HEK293T (cell line): ENCODE measurements at regions of chr7 and their contacts with region 1.

Region 1: DNA sequence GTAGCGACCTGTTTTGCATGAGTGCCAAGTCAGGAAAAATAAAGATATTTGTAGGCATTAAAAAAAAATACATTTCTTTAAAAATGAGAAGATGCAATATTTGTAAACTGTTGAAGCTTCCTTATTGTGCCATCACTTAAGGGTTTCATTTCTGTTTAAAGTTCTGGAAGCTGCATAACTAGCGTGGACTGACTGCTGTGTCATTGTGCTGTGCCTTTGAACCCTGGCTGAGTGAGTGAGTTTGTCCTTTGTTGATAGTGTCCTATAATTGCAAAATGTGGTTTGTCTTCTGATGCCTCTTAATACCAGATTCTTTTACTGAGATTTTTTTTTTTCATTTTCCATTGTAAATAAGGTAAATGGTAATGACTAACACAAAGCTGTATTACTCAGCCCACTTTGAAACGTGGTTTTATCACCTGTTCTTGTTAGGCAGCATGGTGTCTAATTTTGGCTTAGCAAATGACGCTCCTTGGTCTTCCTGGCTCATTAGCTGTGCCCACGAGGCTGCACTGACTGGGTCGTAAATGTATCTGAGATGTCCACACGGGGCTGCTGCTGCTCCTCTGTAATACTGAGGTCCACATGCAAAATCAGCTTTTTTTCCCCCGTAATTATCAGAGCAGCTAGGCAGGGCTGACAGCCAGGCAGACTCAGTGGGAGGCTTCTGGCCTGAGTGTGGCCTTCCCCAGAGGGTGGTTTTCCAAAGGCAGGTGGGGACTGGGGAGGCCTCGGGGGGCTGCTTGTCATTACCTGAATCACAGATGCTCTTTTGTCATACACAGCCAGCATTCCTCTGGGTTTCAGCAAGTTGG is 14.8 kb downstream of the ZSCAN25 start:
- DNase-seq: peak; percentile 22

Region 2: GRCh38 chr7:99579956-99580777 is 51.3 kb before region 1 on chr7:
- CTCF ChIA-PET with region 1: no interaction called
- POLR2A ChIA-PET with region 1: no interaction called
- DNase-seq: no peak

Region 3: GRCh38 chr7:99616359-99617191 is 14.9 kb before region 1 on chr7 and contains the start of gene ZSCAN25:
- CTCF ChIA-PET with region 1: no interaction called
- POLR2A ChIA-PET with region 1: interaction called, 13 read pairs
- DNase-seq: peak; percentile 96

Region 4: GRCh38 chr7:99648843-99649242 is 17.3 kb after region 1 on chr7:
- CTCF ChIA-PET with region 1: no interaction called
- POLR2A ChIA-PET with region 1: no interaction called
- DNase-seq: no peak

Region 5: DNA sequence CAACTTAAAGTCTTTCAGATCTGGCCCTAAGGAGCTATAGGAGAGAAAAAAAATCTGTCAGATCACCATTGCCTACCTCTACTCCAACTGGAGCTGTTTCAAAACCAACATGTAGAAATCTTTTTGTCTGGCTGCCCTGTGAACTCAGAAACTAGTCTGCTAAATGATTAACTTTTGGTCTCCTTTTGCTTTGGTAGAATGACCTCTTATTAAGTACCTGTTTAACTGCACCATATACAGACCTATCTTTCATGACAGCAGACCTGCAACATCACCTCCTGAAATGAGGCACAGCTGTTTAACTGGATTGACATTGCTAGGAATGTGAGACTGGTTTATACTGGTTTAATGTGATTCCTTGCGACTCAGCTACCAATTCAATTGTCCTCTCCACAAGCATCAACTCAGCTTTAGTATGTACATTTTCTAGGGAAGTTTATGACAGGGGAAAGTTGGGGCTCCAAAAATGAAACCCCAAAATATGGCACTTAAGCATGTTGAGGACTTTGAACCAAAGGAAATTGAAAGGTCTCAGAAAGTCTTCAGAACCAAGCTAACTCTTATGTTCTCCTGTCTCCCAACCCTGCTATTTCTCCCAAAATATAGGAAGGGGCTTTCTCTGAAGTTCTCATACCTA is 198.1 kb after region 1 on chr7:
- CTCF ChIA-PET with region 1: no interaction called
- POLR2A ChIA-PET with region 1: no interaction called
- DNase-seq: no peak